ENCODE measurements at regions of chr11 and their contacts with region 1.

Region 1: GRCh38 chr11:66976048-66976467 is 954 bp downstream of the C11orf86 start:
- DNase-seq: peak; percentile 51
- H3K4me3 ChIP-seq: no peak overlapping the region
- H3K27ac ChIP-seq: no peak overlapping the region
- H3K4me1 ChIP-seq: peaks cover 4% of the 10 kb centered on the region
- H3K27me3 ChIP-seq: no peaks in the 10 kb centered on the region
- CTCF ChIP-seq: peak; percentile 69 to 82
- POLR2A ChIP-seq: no peak

Region 2: GRCh38 chr11:66694732-66695207 is 281.3 kb before region 1 on chr11:
- CTCF ChIA-PET with region 1: interaction called, 10 read pairs
- POLR2A ChIA-PET with region 1: no interaction called
- dilution Hi-C with region 1: no loop called
- intact Hi-C with region 1: loop called (anchors 1 kb)
- DNase-seq: peak; percentile 92
- H3K4me3 ChIP-seq: no peak overlapping the region
- H3K27ac ChIP-seq: no peak overlapping the region
- H3K4me1 ChIP-seq: no peaks in the 10 kb centered on the region
- H3K27me3 ChIP-seq: no peaks in the 10 kb centered on the region
- CTCF ChIP-seq: peak; percentile 95 to 99
- POLR2A ChIP-seq: no peak

Region 3: GRCh38 chr11:66842896-66843775 is 132.9 kb before region 1 on chr11 and contains the start of gene RCE1:
- CTCF ChIA-PET with region 1: interaction called, 44 read pairs
- POLR2A ChIA-PET with region 1: no interaction called
- dilution Hi-C with region 1: no loop called
- intact Hi-C with region 1: no loop called
- DNase-seq: peak; percentile 91
- H3K4me3 ChIP-seq: peak within 1 kb of the TSS; percentile 63 to 95 (median 74)
- H3K27ac ChIP-seq: peak within 1 kb of the TSS; percentile 97
- H3K4me1 ChIP-seq: peaks cover 27% of the 10 kb centered on the region
- H3K27me3 ChIP-seq: no peaks in the 10 kb centered on the region
- CTCF ChIP-seq: no peak
- POLR2A ChIP-seq: peak; percentile 94
- total RNA-seq, gene RCE1: 26.9 and 27.8 TPM in 2 replicates

Region 4: GRCh38 chr11:66883016-66883968 is 92.8 kb before region 1 on chr11:
- CTCF ChIA-PET with region 1: interaction called, 49 read pairs
- POLR2A ChIA-PET with region 1: no interaction called
- dilution Hi-C with region 1: no loop called
- intact Hi-C with region 1: loop called (anchors 2 kb)
- DNase-seq: peak; percentile 50
- H3K4me3 ChIP-seq: no peak overlapping the region
- H3K27ac ChIP-seq: no peak overlapping the region
- H3K4me1 ChIP-seq: peaks cover 5% of the 10 kb centered on the region
- H3K27me3 ChIP-seq: no peaks in the 10 kb centered on the region
- CTCF ChIP-seq: peak; percentile 78 to 85
- POLR2A ChIP-seq: no peak

Region 5: DNA sequence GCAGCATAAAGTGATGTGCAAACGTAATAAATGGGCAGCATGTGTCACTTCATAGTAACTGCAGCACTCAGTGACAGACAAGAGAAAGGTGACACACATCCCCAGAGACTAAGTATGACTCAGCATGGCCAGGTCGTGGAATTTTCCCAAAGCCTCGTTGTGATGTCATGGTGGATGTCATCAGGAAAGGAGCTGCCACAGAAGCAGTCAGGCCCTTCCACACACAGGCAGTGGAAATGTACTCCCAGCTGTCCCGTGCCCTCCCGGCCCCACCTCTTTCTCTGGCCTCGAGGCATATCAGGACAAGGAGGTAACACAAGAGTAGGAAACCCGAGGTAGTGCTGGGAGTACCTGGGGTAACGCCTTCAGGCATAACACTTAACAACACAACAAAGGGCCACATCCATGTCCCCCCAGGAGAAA is 25.9 kb before region 1 on chr11:
- CTCF ChIA-PET with region 1: interaction called, 11 read pairs
- POLR2A ChIA-PET with region 1: no interaction called
- dilution Hi-C with region 1: no loop called
- intact Hi-C with region 1: no loop called
- DNase-seq: peak; percentile 80
- H3K4me3 ChIP-seq: no peak overlapping the region
- H3K27ac ChIP-seq: no peak overlapping the region
- H3K4me1 ChIP-seq: no peaks in the 10 kb centered on the region
- H3K27me3 ChIP-seq: no peaks in the 10 kb centered on the region
- CTCF ChIP-seq: no peak
- POLR2A ChIP-seq: no peak